ENCODE measurements at regions of chr15 and their contacts with region 1.

Region 1: GRCh38 chr15:29103824-29104565 is 165.6 kb downstream of the NSMCE3 start:
- DNase-seq: peak; percentile 28
- H3K4me3 ChIP-seq: peak overlapping the region; percentile 53
- CTCF ChIP-seq: peak; percentile 99

Region 2: GRCh38 chr15:28885630-28886430 is 218.2 kb before region 1 on chr15 and contains the start of gene APBA2:
- CTCF ChIA-PET with region 1: interaction called, 18 read pairs
- POLR2A ChIA-PET with region 1: no interaction called
- DNase-seq: no peak
- H3K4me3 ChIP-seq: peak within 1 kb of the TSS; percentile 63
- CTCF ChIP-seq: peak; percentile 18

Region 3: DNA sequence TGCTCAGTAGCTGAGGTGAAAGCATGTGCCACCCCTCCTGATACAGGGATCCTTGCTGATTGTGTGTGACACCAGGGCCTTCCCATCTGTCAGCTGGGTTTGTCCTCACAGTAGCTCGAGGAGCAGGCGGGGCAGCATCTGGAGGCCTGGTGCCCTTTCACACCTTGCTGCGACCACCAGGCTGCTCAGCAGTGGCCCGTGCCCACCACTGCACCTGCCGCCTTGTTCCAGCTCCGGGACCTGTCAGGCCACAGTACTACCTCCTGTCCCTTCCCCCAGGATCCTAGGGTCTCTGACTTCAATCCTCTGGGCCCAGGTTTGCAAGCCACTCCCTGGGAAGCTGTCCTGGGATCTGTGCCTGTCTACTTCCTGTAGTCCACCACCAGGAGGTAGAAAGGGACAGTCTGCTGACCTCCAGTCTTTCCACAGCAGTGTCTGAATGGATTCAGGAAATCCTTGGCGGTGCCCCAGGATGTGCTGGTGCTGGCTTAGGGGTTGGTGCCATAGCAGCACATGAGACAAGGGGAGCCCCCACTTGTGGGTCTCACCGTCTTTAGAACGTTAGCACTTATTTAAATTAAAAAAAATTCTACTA is 190.7 kb before region 1 on chr15:
- CTCF ChIA-PET with region 1: interaction called, 20 read pairs
- POLR2A ChIA-PET with region 1: no interaction called
- DNase-seq: no peak
- H3K4me3 ChIP-seq: no peak overlapping the region
- CTCF ChIP-seq: peak; percentile 16

Region 4: DNA sequence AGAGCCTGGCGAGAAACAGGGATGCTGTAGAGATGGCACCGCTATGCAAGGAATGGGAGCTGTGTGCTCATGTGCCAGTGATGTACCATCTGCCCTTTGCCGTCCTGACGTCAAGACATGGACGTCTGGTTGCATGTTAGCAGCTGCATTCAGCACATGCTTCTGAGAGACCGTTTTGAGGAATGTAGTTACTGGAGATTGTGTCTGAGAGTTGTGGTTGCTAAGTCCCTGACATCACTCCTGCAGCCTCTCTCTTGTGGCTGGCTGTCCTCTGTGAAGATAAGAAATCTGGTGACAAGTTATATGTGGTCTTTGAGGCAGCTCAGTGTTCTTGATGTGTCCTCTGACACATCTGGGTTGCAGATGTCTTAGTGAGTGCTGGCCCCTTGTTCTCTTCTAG is 53.1 kb before region 1 on chr15:
- CTCF ChIA-PET with region 1: interaction called, 15 read pairs
- POLR2A ChIA-PET with region 1: no interaction called
- DNase-seq: peak; percentile 72
- H3K4me3 ChIP-seq: no peak overlapping the region
- CTCF ChIP-seq: no peak

Region 5: DNA sequence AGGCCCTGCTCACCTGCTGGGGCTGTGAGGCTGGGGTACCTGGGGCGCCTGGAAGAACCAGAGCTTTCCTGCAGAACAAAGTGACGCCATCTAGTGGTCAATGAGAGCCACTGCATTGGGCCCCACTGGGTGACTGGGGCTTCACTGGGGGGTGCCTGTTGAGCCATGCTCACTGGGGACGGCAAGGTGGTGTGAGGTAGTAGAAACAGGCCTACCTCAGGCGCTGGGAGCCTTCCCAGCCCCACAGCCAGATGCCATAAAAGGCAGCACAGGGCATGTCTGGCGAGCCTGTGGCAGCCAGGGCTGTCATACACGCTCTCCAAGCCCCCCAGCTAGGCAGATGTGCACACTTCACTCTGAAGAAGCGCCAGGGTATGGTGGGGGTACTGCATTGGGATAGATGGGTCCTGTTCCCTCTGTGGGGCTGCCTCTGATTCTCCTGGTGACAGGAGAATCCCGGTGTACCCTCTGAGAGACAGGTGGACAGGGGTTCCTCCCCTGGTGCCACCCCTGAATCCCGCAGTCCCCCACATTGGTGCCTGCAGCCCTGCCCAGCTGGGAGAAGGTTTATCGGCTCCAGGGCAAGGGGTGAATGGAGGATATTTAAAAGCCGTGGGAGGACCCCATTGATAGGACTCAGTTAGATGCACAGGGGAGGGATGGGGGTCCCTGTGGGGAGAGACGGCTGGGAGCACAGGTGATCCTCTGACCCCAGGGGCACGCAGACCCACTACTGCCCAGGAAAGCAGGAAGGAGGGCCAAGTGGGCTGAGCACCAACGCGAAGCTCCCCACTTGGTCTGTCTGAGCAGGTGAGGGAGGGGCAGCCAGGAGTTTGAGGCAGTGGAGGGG is 13.2 kb before region 1 on chr15:
- CTCF ChIA-PET with region 1: interaction called, 230 read pairs
- POLR2A ChIA-PET with region 1: no interaction called
- DNase-seq: no peak
- H3K4me3 ChIP-seq: no peak overlapping the region
- CTCF ChIP-seq: peak; percentile 81

Region 6: DNA sequence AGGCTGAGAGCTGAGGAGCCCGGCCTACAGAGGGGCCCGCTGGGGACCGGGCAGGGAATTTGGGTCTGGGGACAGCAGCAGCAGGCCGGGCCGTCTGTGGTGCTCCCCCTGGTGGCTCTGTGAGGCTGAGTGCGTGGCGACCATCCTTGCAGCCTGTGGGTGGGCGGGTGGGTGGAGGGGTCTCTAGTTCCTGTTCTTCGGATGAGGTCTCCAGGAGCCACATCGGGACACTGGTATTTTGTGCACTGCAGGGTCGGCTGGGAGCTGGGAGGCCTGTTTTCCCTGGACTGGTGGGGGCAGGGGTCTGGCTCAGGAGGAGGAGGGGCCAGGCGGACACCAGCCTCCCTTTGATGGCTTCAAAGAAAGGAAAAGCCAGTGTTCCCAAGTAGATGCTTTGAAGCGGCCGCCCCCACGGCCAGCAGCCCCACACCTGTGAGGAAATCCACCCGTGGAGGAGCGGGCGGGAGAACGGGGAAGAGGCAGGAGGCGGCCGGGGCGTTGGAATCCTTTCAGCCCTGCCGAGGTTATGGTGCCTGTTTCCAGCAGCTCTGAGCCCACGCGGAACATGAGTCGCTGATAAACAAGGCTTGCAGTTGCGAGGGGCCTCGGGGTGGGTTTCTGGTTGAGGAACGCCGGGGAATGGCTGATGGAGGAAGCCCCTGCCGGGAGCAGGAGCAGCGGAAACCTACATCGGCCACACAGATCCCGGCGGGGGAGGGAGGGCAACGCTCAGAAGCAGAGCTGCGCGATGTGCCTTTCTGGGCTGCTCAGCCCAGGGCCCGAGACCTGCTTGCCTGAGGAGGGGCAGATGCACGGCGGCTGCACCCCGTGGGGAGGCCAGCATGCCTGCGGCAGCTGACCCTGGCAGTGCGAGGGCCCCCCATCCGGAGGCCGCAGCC is 11.3 kb after region 1 on chr15:
- CTCF ChIA-PET with region 1: interaction called, 61 read pairs
- POLR2A ChIA-PET with region 1: no interaction called
- DNase-seq: no peak
- H3K4me3 ChIP-seq: peak overlapping the region; percentile 33
- CTCF ChIP-seq: peak; percentile 58

Region 7: DNA sequence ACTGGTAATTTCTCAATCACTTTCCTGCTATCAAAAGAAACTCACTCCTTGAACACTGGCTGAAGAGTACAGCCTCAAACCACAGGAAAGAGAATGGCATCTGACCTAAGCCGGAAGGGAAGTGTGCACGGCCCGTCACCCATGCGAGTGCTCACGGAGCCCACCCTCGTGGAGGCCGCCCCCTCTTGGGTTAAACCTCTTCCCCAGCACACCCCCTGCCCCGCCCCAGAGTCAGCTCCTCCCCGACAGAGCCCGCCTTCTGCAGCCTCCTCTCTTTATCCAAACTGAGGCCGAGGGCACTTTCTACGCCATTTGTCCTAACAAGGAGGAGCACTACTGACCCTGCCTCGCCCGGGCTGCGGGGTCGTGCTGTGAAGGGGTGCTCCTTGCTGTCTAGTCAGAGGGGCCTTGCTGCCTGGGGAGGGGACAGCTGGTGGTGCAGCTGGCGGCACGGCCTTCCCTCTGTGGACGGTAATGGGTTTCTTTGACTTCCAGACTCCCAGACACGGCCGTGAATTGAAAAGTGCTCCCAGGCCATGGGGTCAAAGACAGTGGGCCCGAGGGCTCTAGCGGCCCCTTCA is 27.9 kb after region 1 on chr15:
- CTCF ChIA-PET with region 1: interaction called, 12 read pairs
- POLR2A ChIA-PET with region 1: no interaction called
- DNase-seq: no peak
- H3K4me3 ChIP-seq: no peak overlapping the region
- CTCF ChIP-seq: no peak